Caco-2 (cell line): ENCODE measurements at regions of chr11 and their contacts with region 1.

Region 1: DNA sequence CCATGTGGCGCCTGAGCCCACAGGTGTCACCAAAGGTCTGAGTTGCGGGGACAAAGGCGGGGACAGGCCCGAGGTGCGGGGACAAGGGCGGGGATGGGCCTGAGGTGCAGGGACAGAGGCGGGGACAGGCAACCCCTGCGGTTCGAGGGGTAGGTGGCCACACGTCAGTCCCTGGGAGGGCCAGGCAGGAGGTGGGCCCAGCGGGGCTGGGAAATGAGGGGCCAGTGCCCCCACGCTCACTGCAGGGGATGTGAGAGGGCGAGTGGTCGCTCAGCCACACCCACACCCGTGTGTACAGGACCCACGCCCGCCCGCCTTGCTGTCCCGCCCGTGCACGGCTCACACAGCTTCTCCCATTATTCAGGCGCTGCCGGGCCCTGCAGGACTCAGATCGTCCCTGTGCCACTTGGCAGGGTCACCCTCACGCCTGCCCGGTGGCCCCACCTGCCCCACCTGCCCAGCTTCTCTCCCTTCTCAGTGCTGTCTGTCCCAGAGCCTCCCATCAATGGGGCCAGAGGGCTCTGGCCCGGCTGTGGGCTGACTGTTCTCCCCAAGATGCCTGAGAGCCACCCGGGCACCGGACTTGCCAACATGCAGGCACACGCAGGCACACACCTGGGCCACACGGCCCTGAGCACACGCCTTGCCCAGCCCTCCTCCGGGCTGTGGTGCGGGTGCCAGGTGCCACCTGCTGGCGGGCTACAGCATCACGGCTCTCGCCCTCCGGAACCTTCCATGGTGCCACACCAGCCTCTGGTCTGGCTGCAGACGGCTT is 14.2 kb upstream of the MUC6 start:
- DNase-seq: peak; percentile 67 to 85
- H3K4me3 ChIP-seq: no peak overlapping the region
- H3K4me3 Mint-ChIP-seq: no peak overlapping the region
- H3K27ac Mint-ChIP-seq: no peak overlapping the region
- H3K4me1 ChIP-seq: no peaks in the 10 kb centered on the region; the same call in 1 of the 2 replicates
- H3K4me1 Mint-ChIP-seq: no peaks in the 10 kb centered on the region
- H3K27me3 ChIP-seq: no peaks in the 10 kb centered on the region
- H3K27me3 Mint-ChIP-seq: peaks cover 7% of the 10 kb centered on the region
- CTCF ChIP-seq: peak; percentile 92 to 94

Region 2: GRCh38 chr11:848380-848931 is 202.3 kb before region 1 on chr11:
- CTCF ChIA-PET with region 1: interaction called, 8 read pairs
- POLR2A ChIA-PET with region 1: no interaction called
- intact Hi-C with region 1: loop called (anchors 1 kb)
- DNase-seq: peak in 1 of 2 experiments; percentile 75
- H3K4me3 ChIP-seq: peak overlapping the region; percentile 46
- H3K4me3 Mint-ChIP-seq: peak overlapping the region; percentile 77
- H3K27ac Mint-ChIP-seq: no peak overlapping the region
- H3K4me1 ChIP-seq: peaks cover 43% of the 10 kb centered on the region
- H3K4me1 Mint-ChIP-seq: no peaks in the 10 kb centered on the region
- H3K27me3 ChIP-seq: no peaks in the 10 kb centered on the region
- H3K27me3 Mint-ChIP-seq: no peaks in the 10 kb centered on the region
- CTCF ChIP-seq: peak; percentile 84 to 89

Region 3: GRCh38 chr11:870127-870413 is 180.7 kb before region 1 on chr11:
- CTCF ChIA-PET with region 1: interaction called, 13 read pairs
- POLR2A ChIA-PET with region 1: no interaction called
- intact Hi-C with region 1: no loop called
- DNase-seq: peak in 1 of 2 experiments; percentile 61
- H3K4me3 ChIP-seq: no peak overlapping the region
- H3K4me3 Mint-ChIP-seq: no peak overlapping the region
- H3K27ac Mint-ChIP-seq: no peak overlapping the region
- H3K4me1 ChIP-seq: no peaks in the 10 kb centered on the region
- H3K4me1 Mint-ChIP-seq: no peaks in the 10 kb centered on the region
- H3K27me3 ChIP-seq: no peaks in the 10 kb centered on the region
- H3K27me3 Mint-ChIP-seq: no peaks in the 10 kb centered on the region
- CTCF ChIP-seq: peak; percentile 40 to 71

Region 4: GRCh38 chr11:898143-898511 is 152.6 kb before region 1 on chr11:
- CTCF ChIA-PET with region 1: interaction called, 7 read pairs
- POLR2A ChIA-PET with region 1: no interaction called
- intact Hi-C with region 1: loop called (anchors 5 kb)
- DNase-seq: peak in 1 of 2 experiments; percentile 39
- H3K4me3 ChIP-seq: no peak overlapping the region
- H3K4me3 Mint-ChIP-seq: no peak overlapping the region
- H3K27ac Mint-ChIP-seq: no peak overlapping the region
- H3K4me1 ChIP-seq: no peaks in the 10 kb centered on the region
- H3K4me1 Mint-ChIP-seq: no peaks in the 10 kb centered on the region
- H3K27me3 ChIP-seq: no peaks in the 10 kb centered on the region
- H3K27me3 Mint-ChIP-seq: no peaks in the 10 kb centered on the region
- CTCF ChIP-seq: peak in 1 of 2 experiments; percentile 49

Region 5: DNA sequence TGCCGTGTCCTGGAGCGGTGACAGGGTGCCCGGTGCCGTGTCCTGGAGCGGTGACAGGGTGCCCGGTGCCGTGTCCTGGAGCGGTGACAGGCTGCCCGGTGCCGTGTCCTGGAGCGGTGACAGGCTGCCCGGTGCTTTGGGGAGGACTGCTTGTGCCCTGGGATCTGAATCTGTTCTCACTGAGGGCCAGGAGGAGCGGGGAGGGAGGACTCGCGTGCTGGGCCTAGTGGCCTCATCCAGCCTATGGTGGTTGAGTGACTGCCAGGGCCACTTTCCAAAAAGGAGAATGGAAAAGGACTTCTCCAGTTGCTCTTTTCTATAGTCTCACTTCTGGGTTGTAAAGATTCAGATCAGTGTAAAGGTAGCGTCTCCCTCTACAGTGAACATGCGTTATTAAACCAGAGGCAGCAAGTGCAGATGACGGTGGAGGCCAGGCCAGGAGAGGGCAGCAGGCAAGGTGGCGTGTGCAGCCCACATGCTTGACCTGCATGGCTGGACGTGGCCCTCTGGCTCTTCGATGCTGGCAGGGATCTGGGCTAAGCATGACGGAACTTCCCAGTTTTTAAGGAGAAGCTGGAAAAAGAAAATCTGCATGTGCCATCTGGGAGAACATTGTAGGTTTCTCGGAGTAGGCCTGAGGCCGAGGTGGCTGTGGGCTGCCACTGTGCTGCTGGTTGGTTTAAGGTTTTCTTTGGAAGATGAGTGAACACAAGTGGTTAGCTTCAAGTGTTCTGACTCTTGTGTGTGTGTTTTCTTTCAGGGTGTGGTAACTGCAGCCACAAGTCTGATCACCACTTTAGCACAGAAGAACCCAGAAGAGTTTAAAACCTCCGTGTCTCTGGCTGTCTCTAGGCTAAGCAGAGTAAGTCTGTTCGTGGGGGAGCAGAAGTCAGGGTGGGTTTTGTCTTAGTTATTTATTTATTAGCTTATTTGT is 70.1 kb before region 1 on chr11:
- CTCF ChIA-PET with region 1: no interaction called
- POLR2A ChIA-PET with region 1: no interaction called
- intact Hi-C with region 1: loop called (anchors 10 kb)
- DNase-seq: peak in 1 of 2 experiments; percentile 42
- H3K4me3 ChIP-seq: no peak overlapping the region
- H3K4me3 Mint-ChIP-seq: no peak overlapping the region
- H3K27ac Mint-ChIP-seq: no peak overlapping the region
- H3K4me1 ChIP-seq: no peaks in the 10 kb centered on the region
- H3K4me1 Mint-ChIP-seq: no peaks in the 10 kb centered on the region
- H3K27me3 ChIP-seq: no peaks in the 10 kb centered on the region
- H3K27me3 Mint-ChIP-seq: no peaks in the 10 kb centered on the region
- CTCF ChIP-seq: peak; percentile 30 to 47